Breast epithelium (tissue), 4 donors: ENCODE measurements at regions of chr1 and their contacts with region 1.

Region 1: DNA sequence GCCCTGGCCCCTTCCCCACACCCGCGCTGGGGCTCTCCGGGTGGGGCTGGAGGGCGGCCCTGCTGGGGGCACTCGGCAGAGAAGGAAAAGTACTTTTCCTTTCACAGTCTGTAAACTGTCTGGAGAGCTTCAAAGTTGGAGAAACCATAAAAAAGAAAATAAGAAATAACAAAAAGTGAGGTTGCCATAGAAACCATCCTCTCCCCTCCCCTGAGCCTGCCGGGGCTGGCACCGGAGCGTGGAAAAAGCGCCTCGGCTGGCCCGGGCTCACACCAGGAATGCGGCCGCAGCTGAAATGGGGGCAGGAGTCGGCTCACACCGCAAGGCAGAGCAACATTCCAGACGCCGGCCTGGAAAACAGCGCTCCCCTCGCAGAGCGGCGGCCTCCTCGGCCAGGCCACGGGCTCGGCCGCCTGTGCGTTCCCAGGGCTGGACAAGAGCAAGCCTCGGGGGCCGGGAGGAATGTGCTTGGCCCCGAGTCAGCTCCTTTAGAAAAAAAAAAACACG is 69.2 kb downstream of the MORN1 start:
- DNase-seq: peak; percentile 88 to 90
- H3K4me3 ChIP-seq: peak overlapping the region in 2 of 3 donors; percentile 28 to 45
- H3K27ac ChIP-seq: peak overlapping the region; percentile 94 to 97
- H3K4me1 ChIP-seq: peaks cover 11 to 16% of the 10 kb centered on the region in 2 donors
- H3K27me3 ChIP-seq: no peaks in the 10 kb centered on the region
- CTCF ChIP-seq: peak in 1 of 3 donors; percentile 37
- POLR2A ChIP-seq: no peak

Region 2: GRCh38 chr1:2296614-2297013 is 25.5 kb before region 1 on chr1:
- intact Hi-C with region 1: loop called (anchors 1 kb)
- DNase-seq: no peak
- H3K4me3 ChIP-seq: no peak overlapping the region
- H3K27ac ChIP-seq: peak overlapping the region in 1 of 2 donors; percentile 63
- H3K4me1 ChIP-seq: peaks cover 20 to 27% of the 10 kb centered on the region in 2 donors
- H3K27me3 ChIP-seq: no peaks in the 10 kb centered on the region
- CTCF ChIP-seq: no peak
- POLR2A ChIP-seq: no peak

Region 3: GRCh38 chr1:4150262-4150661 is 1828.1 kb after region 1 on chr1:
- intact Hi-C with region 1: no loop called
- DNase-seq: no peak
- H3K4me3 ChIP-seq: no peak overlapping the region
- H3K27ac ChIP-seq: no peak overlapping the region
- H3K4me1 ChIP-seq: no peaks in the 10 kb centered on the region
- H3K27me3 ChIP-seq: no peaks in the 10 kb centered on the region
- CTCF ChIP-seq: no peak
- POLR2A ChIP-seq: no peak